ENCODE measurements at regions of chr15 and their contacts with region 1.

Region 1: DNA sequence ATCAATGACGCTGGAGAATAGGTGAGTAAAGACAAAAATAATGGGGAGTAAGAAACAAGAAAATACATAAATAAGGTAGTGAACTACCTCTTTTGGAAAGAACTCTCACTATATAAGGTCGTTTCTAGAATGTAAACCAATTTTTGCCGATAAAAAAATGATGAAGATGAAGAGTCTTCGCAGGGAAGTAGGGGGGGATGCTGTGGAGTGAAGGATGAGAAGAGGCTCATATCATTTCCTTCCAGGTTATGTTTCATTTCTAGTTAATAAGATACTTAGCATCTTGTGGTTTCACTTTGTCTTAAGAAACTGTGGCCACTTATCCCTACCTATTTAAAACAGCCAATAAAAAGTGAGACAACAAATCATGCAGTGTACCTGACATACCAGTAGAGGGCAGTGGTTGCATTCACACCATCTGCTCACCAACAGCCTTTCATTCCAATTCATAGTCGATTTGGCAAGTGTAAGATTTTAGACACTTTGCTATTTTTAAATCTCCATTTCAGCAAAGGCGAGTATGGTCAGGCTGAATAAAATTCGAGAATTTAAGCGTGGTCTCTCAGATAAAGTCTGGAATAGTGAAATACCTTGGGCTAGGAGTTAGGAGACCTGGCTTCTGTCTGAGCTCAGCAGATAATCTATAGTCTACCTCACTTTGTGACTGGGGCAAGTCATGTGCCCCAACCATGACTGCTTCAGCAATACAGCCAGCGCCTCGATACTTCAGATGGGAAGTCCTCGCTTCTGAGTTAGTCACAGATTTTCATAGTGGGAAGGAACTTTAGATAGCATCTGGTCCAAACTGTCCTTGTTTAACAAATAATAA is 28.9 kb upstream of the ICE2 start:
- DNase-seq: peak; percentile 83
- ATAC-seq: peak; percentile 92
- H3K4me3 ChIP-seq: no peak overlapping the region
- H3K27ac ChIP-seq: peak overlapping the region; percentile 46; the same call in 1 of the 2 replicates
- H3K4me1 ChIP-seq: peaks cover 18% of the 10 kb centered on the region
- H3K27me3 ChIP-seq: no peaks in the 10 kb centered on the region
- CTCF ChIP-seq: peak; percentile 88 to 97 (median 95)
- EP300 ChIP-seq: no peak
- POLR2A ChIP-seq: no peak
- RAD21 ChIP-seq: peak; percentile 92

Region 2: GRCh38 chr15:60362321-60363086 is 145.3 kb before region 1 on chr15:
- CTCF ChIA-PET with region 1: interaction called, 29 read pairs
- POLR2A ChIA-PET with region 1: no interaction called
- RAD21 ChIA-PET with region 1: interaction called, 6 read pairs
- SMC1A ChIA-PET with region 1: interaction called, 17 read pairs
- in situ Hi-C with region 1: loop called (anchors 5 kb)
- intact Hi-C with region 1: loop called (anchors 5 kb)
- DNase-seq: no peak
- ATAC-seq: no peak
- H3K4me3 ChIP-seq: no peak overlapping the region
- H3K27ac ChIP-seq: no peak overlapping the region
- H3K4me1 ChIP-seq: no peaks in the 10 kb centered on the region
- H3K27me3 ChIP-seq: no peaks in the 10 kb centered on the region
- CTCF ChIP-seq: no peak
- EP300 ChIP-seq: no peak
- POLR2A ChIP-seq: no peak
- RAD21 ChIP-seq: no peak

Region 3: DNA sequence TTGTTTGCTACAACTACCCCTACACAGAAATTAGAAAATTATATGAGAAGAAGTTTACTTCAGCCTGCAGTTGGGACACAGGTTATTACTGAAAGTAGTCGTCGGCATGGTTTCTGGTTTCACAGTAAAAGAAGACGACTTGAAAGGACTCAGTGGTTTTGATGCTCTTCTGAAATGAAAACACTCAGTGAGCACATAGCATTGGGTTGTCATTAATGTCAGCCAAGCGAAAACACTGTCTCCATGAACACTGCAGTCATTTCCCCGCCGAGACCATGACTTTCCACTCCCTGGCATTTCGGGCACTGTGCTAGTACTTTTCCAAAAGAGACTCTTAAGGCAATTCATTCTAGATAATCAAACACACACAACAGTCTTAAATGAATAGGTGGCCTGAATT is 40.3 kb after region 1 on chr15:
- CTCF ChIA-PET with region 1: interaction called, 55 read pairs
- POLR2A ChIA-PET with region 1: interaction called, 5 read pairs
- RAD21 ChIA-PET with region 1: interaction called, 35 read pairs
- SMC1A ChIA-PET with region 1: interaction called, 45 read pairs
- in situ Hi-C with region 1: no loop called
- intact Hi-C with region 1: loop called (anchors 1 kb)
- DNase-seq: peak; percentile 85
- ATAC-seq: peak; percentile 86
- H3K4me3 ChIP-seq: peak overlapping the region; percentile 11; the same call in 1 of the 2 replicates
- H3K27ac ChIP-seq: peak overlapping the region; percentile 66
- H3K4me1 ChIP-seq: peaks cover 49% of the 10 kb centered on the region
- H3K27me3 ChIP-seq: no peaks in the 10 kb centered on the region
- CTCF ChIP-seq: no peak
- EP300 ChIP-seq: peak; percentile 66 to 76
- POLR2A ChIP-seq: no peak
- RAD21 ChIP-seq: peak; percentile 10; the same call in 1 of the 2 replicates

Region 4: DNA sequence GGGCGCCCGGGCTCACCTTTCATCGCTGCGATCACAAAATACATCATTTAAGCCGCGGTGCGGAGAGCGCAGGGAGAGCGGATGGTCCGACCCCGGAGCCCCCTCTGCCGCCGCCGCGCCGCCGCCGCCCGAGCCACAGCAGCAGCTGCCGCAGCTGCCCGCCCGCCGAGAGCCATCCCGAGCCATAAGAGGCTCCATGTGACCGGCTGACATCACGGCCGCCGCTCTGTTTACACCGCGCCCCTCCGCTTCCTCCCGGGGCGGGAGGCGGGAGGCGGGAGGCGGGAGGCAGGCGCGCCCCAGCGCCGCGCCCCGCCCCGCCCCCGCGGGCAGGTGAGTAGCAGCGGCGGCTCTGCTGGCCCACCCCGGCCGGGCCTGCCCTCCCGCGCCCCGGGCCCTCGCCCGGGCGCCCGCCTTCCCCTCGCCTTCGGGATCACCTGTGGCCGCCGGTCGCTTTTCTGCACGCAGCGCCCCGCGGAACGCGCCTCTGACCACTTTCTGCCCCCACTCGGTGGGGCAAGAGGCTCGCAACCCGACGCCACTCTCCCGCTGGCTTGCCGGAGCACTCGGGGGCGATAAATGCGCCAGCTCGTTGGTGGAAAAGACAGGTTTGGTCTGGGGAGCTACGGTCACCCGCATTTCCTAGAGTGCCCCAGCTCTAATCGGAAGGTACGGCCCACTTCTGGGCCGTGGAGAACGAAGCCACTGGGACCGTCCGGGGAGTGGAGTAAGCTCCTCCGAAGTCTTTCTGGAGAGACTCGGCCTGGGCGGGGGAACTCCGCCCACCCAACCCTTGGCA is 84.8 kb after region 1 on chr15:
- CTCF ChIA-PET with region 1: interaction called, 56 read pairs
- POLR2A ChIA-PET with region 1: no interaction called
- RAD21 ChIA-PET with region 1: interaction called, 11 read pairs
- SMC1A ChIA-PET with region 1: interaction called, 11 read pairs
- in situ Hi-C with region 1: no loop called
- intact Hi-C with region 1: no loop called
- DNase-seq: no peak
- ATAC-seq: peak; percentile 74
- H3K4me3 ChIP-seq: peak overlapping the region; percentile 83
- H3K27ac ChIP-seq: no peak overlapping the region
- H3K4me1 ChIP-seq: no peaks in the 10 kb centered on the region
- H3K27me3 ChIP-seq: no peaks in the 10 kb centered on the region; a peak in 1 of 4 replicates
- CTCF ChIP-seq: peak; percentile 20 to 40 (median 35); a peak in 4 of 6 replicates
- EP300 ChIP-seq: no peak
- POLR2A ChIP-seq: peak; percentile 82
- RAD21 ChIP-seq: peak; percentile 19; the same call in 1 of the 2 replicates

Region 5: DNA sequence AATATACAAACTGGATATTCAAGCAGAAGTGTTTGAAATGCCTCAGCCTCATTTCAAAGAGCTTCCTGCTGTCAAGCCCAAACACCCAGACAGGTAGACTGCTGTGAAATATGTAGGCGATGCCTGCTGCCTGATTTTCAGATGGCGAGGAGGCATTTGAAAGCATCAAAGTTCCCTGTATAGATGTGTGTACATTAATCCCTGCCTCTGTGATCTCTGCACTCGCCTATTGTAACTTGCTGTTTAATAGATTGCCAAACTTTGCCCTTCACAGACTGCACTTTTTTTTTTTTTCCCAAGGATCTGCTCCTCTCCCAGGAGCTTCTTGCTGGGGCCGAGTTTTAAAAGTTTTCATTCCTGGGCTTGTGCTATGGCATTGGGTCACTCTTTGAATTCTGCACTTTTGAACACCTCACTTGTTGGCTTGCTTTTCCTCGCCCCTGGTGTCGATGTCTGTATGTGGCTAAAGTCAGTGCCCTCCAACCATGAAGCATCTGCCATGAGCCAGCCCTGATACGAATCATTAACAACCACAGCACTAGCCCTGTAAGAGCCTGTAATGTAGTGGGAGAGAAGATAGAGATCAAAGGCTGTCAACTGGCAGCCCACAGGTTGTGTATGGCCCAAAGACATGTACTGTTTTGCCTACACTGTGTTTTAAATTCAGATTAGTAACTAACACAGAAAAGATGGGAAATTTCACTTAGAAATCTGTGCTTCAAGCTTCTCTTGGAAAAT is 258.8 kb after region 1 on chr15:
- CTCF ChIA-PET with region 1: no interaction called
- POLR2A ChIA-PET with region 1: no interaction called
- RAD21 ChIA-PET with region 1: no interaction called
- SMC1A ChIA-PET with region 1: no interaction called
- in situ Hi-C with region 1: no loop called
- intact Hi-C with region 1: no loop called
- DNase-seq: no peak
- ATAC-seq: no peak
- H3K4me3 ChIP-seq: no peak overlapping the region
- H3K27ac ChIP-seq: no peak overlapping the region
- H3K4me1 ChIP-seq: no peaks in the 10 kb centered on the region
- H3K27me3 ChIP-seq: no peaks in the 10 kb centered on the region; a peak in 1 of 4 replicates
- CTCF ChIP-seq: no peak
- EP300 ChIP-seq: no peak
- POLR2A ChIP-seq: no peak
- RAD21 ChIP-seq: no peak

Region 6: DNA sequence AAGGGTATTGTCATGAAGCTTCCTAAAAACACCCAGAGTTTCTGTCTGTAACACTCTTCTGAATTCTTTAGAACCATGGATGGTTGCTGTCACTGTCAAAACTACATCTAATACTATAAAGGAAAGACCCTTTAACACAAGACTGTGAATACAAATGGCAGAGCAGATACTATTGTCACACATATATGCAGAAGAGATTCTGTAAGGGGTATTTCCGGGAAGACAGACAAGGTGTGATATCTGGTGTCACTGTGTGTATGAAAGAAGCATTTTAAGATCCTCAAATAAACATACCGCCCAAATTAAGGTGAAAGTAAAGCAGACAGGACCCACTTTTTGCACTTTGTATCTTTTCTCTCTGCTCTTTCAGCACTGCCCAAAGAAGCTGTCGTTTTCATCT is 414.9 kb after region 1 on chr15:
- CTCF ChIA-PET with region 1: interaction called, 3 read pairs
- POLR2A ChIA-PET with region 1: no interaction called
- RAD21 ChIA-PET with region 1: no interaction called
- SMC1A ChIA-PET with region 1: interaction called, 4 read pairs
- in situ Hi-C with region 1: loop called (anchors 5 kb)
- intact Hi-C with region 1: loop called (anchors 2 kb)
- DNase-seq: no peak
- ATAC-seq: no peak
- H3K4me3 ChIP-seq: no peak overlapping the region
- H3K27ac ChIP-seq: no peak overlapping the region
- H3K4me1 ChIP-seq: no peaks in the 10 kb centered on the region
- H3K27me3 ChIP-seq: no peaks in the 10 kb centered on the region
- CTCF ChIP-seq: no peak
- EP300 ChIP-seq: no peak
- POLR2A ChIP-seq: no peak
- RAD21 ChIP-seq: no peak